Activated CD4-positive, alpha-beta T cell treated with anti-CD3 and anti-CD28 coated beads, Interleukin-2, amount 10 ng/mL, durations not matched to agents 24 days and 14 days (primary cell): ENCODE measurements at regions of chr5 and their contacts with region 1.

Region 1: GRCh38 chr5:91162534-91163381 is 220.4 kb downstream of the ARRDC3 start:
- DNase-seq: peak; percentile 90
- H3K4me3 Mint-ChIP-seq: peak overlapping the region; percentile 63
- H3K27ac Mint-ChIP-seq: peak overlapping the region; percentile 88
- H3K4me1 Mint-ChIP-seq: peaks cover 25% of the 10 kb centered on the region
- H3K27me3 Mint-ChIP-seq: peaks cover 3% of the 10 kb centered on the region

Region 2: GRCh38 chr5:90940227-90940995 is 222.3 kb before region 1 on chr5:
- intact Hi-C with region 1: loop called (anchors 10 kb)
- DNase-seq: peak; percentile 84
- H3K4me3 Mint-ChIP-seq: no peak overlapping the region
- H3K27ac Mint-ChIP-seq: peak overlapping the region; percentile 81
- H3K4me1 Mint-ChIP-seq: peaks cover 10% of the 10 kb centered on the region
- H3K27me3 Mint-ChIP-seq: no peaks in the 10 kb centered on the region

Region 3: DNA sequence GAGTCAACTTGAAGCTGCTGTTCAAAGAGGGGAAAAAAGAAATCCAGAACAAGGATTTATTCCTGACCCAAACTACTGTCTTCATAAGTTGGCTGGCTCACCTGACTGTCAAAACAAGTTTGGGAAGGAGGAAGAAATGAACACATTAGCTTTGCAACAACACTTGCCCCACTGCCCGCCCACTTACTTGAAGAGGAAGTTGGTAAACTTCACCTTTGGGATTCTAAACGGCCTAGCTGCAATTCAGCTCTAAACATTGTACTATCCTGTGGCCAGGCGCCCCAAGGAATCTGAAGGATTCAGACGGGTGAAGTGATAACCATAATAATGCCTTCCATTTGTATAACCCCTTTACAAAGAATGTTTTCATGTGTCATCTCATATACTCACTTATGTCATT is 21.0 kb after region 1 on chr5:
- intact Hi-C with region 1: loop called (anchors 2 kb)
- DNase-seq: peak; percentile 55
- H3K4me3 Mint-ChIP-seq: no peak overlapping the region
- H3K27ac Mint-ChIP-seq: no peak overlapping the region
- H3K4me1 Mint-ChIP-seq: peaks cover 9% of the 10 kb centered on the region
- H3K27me3 Mint-ChIP-seq: peaks cover 14% of the 10 kb centered on the region

Region 4: DNA sequence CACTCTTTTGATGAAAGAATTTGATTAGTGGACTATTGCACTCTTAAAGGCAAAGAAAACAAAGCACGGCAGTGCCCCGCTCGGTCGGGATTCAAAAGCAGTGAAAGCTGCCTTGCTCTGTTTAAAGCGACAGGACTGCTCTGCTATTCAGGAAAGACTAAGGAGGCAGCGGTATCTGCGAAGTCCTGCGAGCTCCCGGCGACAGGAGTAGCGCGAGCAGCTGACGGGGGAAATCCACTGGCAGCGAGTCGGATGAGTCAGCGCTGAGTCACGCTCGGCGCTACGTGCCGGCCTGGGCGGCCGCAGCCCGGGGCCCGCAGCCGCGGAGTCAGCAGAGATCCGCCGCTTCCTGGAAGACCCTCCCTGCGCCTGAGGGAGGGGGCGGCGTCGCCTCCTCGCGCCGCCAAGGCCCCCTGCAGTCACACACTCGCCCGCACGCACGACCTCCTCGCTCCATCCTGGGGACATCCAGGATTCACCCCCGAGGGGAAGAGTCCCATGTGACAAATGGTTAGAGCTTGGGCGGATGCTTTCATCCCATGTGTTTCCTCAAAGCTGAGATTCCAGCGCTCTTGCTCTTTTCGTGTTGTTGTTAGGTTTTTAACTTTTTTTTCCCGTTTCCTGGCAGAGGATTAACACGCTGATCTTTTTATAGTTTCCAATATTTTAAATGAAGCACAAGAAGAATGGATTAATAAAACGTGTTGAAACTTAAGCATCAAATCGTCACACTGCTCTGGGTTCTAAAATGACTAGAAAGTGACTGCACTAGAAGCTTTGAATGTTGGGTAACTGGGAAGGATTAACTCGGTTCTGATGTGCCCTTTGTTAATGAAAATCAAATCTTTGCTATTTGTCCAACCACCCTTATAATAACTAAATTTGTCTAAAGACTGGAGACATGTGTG is 117.9 kb after region 1 on chr5:
- intact Hi-C with region 1: loop called (anchors 2 kb)
- DNase-seq: peak; percentile 95
- H3K4me3 Mint-ChIP-seq: peak overlapping the region; percentile 85
- H3K27ac Mint-ChIP-seq: peak overlapping the region; percentile 92
- H3K4me1 Mint-ChIP-seq: peaks cover 28% of the 10 kb centered on the region
- H3K27me3 Mint-ChIP-seq: peaks cover 4% of the 10 kb centered on the region